ENCODE measurements at regions of chr16 and their contacts with region 1.

Region 1: GRCh38 chr16:10964039-10964890 is 19.9 kb downstream of the CLEC16A start:
- DNase-seq: peak; percentile 95
- H3K4me3 Mint-ChIP-seq: peak overlapping the region; percentile 74
- H3K27ac Mint-ChIP-seq: peak overlapping the region; percentile 97
- H3K4me1 Mint-ChIP-seq: peaks cover 53% of the 10 kb centered on the region
- H3K27me3 Mint-ChIP-seq: no peaks in the 10 kb centered on the region

Region 2: DNA sequence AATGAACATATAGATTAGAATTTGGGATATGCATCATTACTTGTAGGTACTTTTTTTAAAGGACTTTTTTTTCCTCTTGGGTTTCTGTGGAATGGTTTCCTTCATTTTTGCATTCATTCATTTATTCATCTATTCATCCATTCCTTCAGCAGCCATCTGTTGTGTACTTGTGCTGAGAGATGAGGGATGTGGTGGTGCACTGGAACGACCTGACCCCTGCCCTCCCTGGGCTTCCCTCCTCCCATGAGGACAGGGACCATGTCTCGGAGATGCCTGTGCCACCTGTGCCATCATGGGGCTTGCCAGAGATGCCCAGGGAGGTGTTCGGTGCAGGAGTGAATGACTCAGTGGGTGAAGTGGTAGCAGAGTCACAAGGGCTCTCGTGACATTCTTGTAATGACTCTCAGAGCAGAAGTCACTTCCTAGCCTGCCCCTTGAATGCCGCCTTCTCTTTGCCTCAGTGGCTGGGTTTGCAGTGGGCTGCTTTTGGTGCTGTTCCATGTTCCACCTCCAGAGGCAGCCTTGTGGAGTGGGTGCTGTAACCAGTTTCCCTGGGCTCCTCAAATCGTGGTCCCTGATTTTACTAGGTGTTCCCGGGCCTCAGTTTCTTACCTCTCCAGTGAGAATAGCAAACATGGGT is 24.0 kb after region 1 on chr16:
- intact Hi-C with region 1: loop called (anchors 1 kb)
- DNase-seq: peak; percentile 89
- H3K4me3 Mint-ChIP-seq: peak overlapping the region; percentile 66
- H3K27ac Mint-ChIP-seq: peak overlapping the region; percentile 92
- H3K4me1 Mint-ChIP-seq: peaks cover 79% of the 10 kb centered on the region
- H3K27me3 Mint-ChIP-seq: no peaks in the 10 kb centered on the region

Region 3: DNA sequence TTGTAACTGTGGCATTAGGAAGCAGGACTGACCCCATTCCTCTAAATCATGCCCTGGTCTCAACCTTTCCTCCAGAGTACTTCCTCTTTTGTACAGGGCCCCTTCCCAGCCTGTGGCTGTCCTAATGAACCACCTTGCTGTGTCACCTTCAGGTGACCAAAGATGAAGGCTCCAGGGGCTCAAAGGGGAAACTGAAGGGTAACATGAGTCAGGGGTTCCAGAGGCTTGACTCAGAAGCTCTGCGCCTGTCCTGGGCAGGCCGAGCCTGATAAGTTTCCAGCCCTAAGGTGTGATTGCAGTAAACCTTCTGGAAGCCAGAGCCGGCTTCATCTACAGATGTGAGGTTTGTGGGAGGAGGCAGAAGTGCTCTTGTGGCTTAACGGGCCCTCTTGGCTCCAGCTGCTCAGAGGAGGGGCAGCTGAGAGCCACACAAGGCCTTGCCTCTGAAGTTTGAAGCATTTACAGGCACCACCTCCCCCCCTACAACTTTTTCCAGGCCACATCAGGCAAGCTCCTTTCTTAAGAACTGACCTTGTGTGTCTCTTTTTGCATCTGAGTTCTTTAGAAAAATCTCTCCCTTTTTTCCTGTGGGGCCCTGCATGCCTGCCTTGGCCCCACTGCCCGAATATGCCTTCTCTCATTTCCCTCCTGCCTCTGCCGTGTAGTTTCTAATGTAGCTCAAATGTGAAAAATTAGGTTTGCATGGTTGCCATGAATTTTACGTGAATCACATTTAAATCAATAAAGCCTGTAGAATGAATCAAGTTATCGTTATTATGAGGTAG is 130.0 kb after region 1 on chr16:
- intact Hi-C with region 1: loop called (anchors 2 kb)
- DNase-seq: peak; percentile 89
- H3K4me3 Mint-ChIP-seq: peak overlapping the region; percentile 71
- H3K27ac Mint-ChIP-seq: peak overlapping the region; percentile 98
- H3K4me1 Mint-ChIP-seq: peaks cover 66% of the 10 kb centered on the region
- H3K27me3 Mint-ChIP-seq: no peaks in the 10 kb centered on the region

Region 4: DNA sequence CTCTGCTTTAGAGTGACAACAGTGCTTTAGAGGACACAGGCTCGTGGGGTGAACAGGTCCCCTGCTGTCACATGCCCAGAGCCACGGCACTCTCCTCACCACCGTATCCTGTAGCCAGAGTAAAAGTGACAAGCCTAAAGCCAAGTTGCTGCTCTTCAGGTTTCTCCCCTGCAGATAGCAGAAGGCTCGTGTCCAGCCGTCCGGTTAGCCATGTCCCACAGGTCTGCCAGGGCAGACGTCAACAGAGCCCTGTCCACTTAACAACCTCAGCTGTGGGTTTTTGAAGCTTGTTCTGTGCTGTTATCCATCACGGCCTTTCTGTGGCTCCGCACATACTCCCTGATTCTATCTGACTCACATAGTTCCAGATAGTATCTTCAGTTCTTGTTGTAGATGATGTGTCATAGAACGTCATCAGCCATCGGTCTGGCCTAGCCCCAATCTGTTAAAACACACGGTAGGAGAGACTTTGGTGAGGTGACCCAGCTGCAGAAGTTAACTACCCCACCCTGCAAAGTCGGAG is 191.1 kb after region 1 on chr16:
- intact Hi-C with region 1: loop called (anchors 5 kb)
- DNase-seq: no peak
- H3K4me3 Mint-ChIP-seq: no peak overlapping the region
- H3K27ac Mint-ChIP-seq: peak overlapping the region; percentile 54
- H3K4me1 Mint-ChIP-seq: peaks cover 50% of the 10 kb centered on the region
- H3K27me3 Mint-ChIP-seq: no peaks in the 10 kb centered on the region

Region 5: DNA sequence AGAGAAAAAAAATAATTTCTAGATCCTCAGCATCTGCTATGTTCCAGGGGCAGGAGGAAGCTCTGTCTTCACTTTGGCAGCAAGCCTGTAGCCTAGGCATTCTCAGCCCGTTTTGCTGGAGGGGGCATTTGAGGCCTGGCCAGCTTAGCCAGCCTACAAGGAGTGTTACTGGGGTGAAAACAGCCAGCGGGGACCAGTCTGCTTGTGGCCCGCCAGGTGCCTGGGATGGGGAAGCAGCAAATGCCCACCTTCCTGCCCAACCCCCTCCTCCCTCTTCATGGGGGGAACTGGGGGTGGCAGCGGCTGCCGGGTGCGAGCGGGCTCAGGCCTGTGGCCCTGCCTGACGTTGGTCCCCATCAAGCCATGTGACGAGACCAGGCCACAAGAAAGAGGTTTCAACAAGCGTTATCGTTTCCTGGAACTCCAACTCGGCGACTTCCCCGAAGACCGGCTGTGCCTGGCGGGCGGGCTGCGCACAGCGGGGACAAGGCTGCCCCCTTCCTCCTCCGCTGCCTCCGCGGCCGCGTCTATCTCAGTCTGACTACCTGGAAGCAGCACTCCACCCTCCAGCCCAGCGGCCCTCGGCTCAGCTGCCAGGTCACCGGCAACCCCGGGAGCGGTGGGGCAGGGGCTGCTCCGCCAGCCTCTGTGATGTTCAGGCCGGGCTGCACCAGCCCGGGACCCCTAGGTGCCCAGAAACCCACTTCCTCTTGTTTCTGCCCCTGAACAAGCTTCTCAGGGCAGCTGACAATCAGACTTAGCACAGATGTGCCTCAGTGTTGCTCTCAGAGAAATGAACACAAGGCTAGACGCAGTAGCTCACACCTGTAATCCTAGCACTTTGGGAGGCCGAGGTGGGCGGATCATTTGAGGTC is 268.8 kb after region 1 on chr16:
- intact Hi-C with region 1: loop called (anchors 1 kb)
- DNase-seq: peak; percentile 98
- H3K4me3 Mint-ChIP-seq: peak overlapping the region; percentile 78
- H3K27ac Mint-ChIP-seq: peak overlapping the region; percentile 98
- H3K4me1 Mint-ChIP-seq: peaks cover 74% of the 10 kb centered on the region
- H3K27me3 Mint-ChIP-seq: no peaks in the 10 kb centered on the region

Region 6: DNA sequence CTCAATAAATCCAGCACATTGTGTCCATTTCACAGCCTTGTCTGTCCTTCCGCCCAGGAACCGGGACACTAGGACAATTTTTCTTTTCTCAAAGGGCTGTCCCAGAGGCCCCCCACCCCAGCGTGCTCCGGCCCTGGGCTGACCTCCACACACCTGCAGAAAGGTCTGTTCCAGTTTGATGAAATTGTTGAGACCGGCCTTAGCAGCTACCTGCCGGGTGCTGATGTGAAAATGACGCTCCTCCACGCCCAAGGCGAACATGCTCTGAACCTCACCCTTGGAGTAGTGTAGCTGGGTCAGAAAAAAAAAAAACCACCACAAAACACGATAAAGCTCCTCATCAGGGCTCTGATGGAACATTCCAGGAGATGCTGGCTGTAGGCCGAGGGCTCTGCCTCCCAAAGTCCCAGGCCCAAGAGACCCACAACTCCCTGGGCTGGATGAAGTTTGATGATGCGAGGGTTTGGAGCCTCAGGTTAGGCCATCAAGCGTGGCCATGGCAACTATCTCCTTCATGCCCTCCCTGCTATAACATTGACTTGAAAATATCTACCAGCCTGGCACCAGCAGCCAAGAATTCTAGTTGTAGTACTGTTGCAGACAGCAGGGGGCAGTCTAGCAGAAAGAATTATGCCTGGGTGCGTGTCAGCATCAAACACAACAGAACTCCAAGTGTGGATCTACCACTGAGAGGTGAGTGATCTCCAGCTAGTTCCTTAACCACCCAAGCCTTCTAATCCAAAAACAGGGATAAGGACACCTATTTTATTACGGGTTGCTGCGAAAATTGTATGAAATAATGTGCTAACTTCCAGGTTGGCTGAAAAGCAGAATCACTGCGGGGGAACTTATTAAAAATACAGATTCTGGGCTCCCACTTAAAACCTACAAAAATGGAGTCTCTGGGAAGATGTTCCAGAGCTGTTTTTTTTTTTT is 443.1 kb after region 1 on chr16:
- intact Hi-C with region 1: loop called (anchors 2 kb)
- DNase-seq: peak; percentile 90
- H3K4me3 Mint-ChIP-seq: no peak overlapping the region
- H3K27ac Mint-ChIP-seq: no peak overlapping the region
- H3K4me1 Mint-ChIP-seq: peaks cover 2% of the 10 kb centered on the region
- H3K27me3 Mint-ChIP-seq: peaks cover 3% of the 10 kb centered on the region

Region 7: GRCh38 chr16:11715246-11715947 is 751.1 kb after region 1 on chr16:
- intact Hi-C with region 1: loop called (anchors 1 kb)
- DNase-seq: no peak
- H3K4me3 Mint-ChIP-seq: no peak overlapping the region
- H3K27ac Mint-ChIP-seq: no peak overlapping the region
- H3K4me1 Mint-ChIP-seq: peaks cover 5% of the 10 kb centered on the region
- H3K27me3 Mint-ChIP-seq: no peaks in the 10 kb centered on the region